Activated B cell treated with CpG ODN at 0.5 μM for 24 hours (primary cell): ENCODE measurements at regions of chr19 and their contacts with region 1.

Region 1: GRCh38 chr19:17957149-17957849 is 9.6 kb upstream of the KCNN1 start:
- DNase-seq: no peak
- ATAC-seq: no peak
- H3K4me3 Mint-ChIP-seq: no peak overlapping the region
- H3K27ac Mint-ChIP-seq: no peak overlapping the region
- H3K4me1 Mint-ChIP-seq: peaks cover 6% of the 10 kb centered on the region
- H3K27me3 Mint-ChIP-seq: peaks cover 27% of the 10 kb centered on the region
- CTCF ChIP-seq: no peak

Region 2: DNA sequence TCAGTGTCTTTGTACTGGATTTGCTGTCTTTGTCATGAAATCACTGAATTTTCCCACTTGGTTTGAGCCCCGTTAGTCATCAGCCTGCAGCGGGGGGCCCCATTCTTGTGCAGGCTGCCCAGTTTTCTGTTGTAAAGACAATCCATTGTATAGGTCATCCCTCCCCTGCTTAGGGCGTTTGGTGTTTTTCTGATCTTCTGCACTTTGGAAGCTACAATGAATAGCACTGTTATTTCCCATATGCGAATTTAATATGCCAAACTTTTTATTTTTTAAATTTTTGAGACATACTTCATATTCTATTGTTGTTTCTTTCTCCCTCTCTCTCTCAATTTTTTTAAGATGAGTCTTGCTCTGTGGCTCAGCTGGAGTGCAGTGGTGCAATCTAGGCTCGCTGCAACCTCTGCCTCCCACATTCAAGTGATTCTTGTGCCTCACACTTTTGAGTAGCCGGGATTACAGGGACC is 477.9 kb before region 1 on chr19:
- CTCF ChIA-PET with region 1: no interaction called
- POLR2A ChIA-PET with region 1: no interaction called
- intact Hi-C with region 1: no loop called
- DNase-seq: no peak
- ATAC-seq: no peak
- H3K4me3 Mint-ChIP-seq: no peak overlapping the region
- H3K27ac Mint-ChIP-seq: no peak overlapping the region
- H3K4me1 Mint-ChIP-seq: no peaks in the 10 kb centered on the region
- H3K27me3 Mint-ChIP-seq: no peaks in the 10 kb centered on the region
- CTCF ChIP-seq: no peak

Region 3: GRCh38 chr19:17977021-17977420 is 19.7 kb after region 1 on chr19:
- CTCF ChIA-PET with region 1: no interaction called
- POLR2A ChIA-PET with region 1: interaction called, 16 read pairs
- intact Hi-C with region 1: no loop called
- DNase-seq: no peak
- ATAC-seq: no peak
- H3K4me3 Mint-ChIP-seq: no peak overlapping the region
- H3K27ac Mint-ChIP-seq: no peak overlapping the region
- H3K4me1 Mint-ChIP-seq: peaks cover 18% of the 10 kb centered on the region
- H3K27me3 Mint-ChIP-seq: no peaks in the 10 kb centered on the region
- CTCF ChIP-seq: no peak

Region 4: DNA sequence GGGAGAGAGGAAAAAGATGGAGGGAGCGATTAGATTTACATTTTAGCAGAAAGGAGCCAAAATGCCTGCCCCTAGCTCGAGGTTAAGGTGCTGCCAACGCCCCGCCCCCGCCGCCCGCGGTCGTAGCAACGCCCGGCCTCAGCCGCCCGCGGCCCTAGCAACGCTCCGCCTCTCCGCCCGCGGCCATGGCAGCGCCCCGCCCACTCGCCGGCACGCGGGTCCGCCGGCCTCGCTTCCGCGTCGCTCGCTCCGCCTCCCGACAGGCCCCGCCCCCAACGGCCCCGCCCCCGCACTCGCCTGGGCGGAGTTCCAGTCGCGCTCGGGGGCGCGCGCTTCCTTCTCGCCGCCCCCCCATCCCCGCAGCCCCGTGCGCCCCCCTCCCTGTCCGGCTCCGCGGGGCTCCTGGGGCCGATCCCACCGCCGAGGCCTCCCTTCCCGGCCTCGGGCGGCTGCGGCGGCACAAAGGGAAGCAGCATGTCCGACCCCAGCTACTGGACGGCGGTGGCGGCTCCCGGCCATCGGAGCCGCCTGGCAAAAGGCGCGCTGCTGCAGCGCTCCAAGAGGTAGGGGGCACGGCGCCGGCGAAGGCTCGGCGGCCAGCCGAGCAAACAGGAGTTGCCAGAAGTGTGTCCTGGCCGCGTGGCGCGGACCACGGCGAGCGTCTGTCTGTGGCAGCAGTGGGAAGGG is 160.5 kb after region 1 on chr19:
- CTCF ChIA-PET with region 1: no interaction called
- POLR2A ChIA-PET with region 1: no interaction called
- intact Hi-C with region 1: no loop called
- DNase-seq: peak; percentile 98
- ATAC-seq: peak; percentile 93
- H3K4me3 Mint-ChIP-seq: peak overlapping the region; percentile 75
- H3K27ac Mint-ChIP-seq: peak overlapping the region; percentile 77
- H3K4me1 Mint-ChIP-seq: peaks cover 40% of the 10 kb centered on the region
- H3K27me3 Mint-ChIP-seq: no peaks in the 10 kb centered on the region
- CTCF ChIP-seq: no peak